Heart right ventricle (tissue), 16 donors: ENCODE measurements at regions of chr12 and their contacts with region 1.

Region 1: GRCh38 chr12:110826592-110827200 is 20.1 kb upstream of the CCDC63 start:
- DNase-seq: peak; percentile 86 to 87
- ATAC-seq: peak; percentile 92 to 97 (median 94)
- H3K4me3 ChIP-seq: peak overlapping the region in 4 of 10 donors; percentile 23 to 37 (median 30)
- H3K27ac ChIP-seq: no peak overlapping the region
- H3K4me1 ChIP-seq: peaks cover 0 to 6% (median 0%) of the 10 kb centered on the region in 9 donors
- H3K27me3 ChIP-seq: no peaks in the 10 kb centered on the region
- CTCF ChIP-seq: peak; percentile 60 to 87 (median 78)

Region 2: DNA sequence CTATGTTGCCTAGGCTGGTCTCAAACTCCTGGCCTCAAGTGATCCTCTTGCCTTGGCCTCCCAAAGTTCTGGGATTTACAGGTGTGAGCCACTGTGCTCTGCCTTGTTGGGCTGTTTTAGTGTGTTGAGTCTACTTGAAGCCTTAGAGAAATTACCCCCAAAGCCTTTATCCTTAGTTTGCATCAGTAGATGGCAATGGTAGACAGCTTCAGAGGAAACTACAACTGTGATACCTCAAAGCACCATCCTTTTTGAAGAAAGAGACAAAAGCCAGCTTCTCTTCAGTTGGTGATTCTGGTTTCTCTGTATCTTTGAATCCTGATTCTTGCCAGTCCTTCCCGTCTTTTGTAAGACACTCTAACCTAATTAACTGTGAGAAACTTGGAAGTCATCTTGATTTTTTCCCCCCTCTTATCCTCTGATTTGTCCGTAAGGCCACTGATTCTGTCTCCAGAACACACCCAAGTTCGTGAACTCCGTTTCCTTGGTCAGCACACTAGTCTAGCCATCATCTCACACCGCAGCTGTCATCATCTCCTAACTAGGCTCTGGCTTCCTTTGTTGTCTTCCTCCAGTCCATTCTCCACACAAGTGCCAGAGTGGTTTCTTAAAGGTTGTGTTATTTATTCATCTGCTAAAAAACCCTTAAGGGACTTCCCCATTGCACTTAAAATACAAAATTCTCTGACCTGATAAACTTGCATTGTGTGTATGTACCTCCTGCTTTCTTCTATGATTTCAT is 525.5 kb before region 1 on chr12:
- intact Hi-C with region 1: no loop called
- DNase-seq: no peak
- ATAC-seq: peak in 1 of 8 donors; percentile 23
- H3K4me3 ChIP-seq: no peak overlapping the region
- H3K27ac ChIP-seq: peak overlapping the region in 6 of 10 donors; percentile 1 to 50 (median 20)
- H3K4me1 ChIP-seq: peaks cover 5 to 94% (median 80%) of the 10 kb centered on the region in 9 donors
- H3K27me3 ChIP-seq: no peaks in the 10 kb centered on the region
- CTCF ChIP-seq: no peak

Region 3: DNA sequence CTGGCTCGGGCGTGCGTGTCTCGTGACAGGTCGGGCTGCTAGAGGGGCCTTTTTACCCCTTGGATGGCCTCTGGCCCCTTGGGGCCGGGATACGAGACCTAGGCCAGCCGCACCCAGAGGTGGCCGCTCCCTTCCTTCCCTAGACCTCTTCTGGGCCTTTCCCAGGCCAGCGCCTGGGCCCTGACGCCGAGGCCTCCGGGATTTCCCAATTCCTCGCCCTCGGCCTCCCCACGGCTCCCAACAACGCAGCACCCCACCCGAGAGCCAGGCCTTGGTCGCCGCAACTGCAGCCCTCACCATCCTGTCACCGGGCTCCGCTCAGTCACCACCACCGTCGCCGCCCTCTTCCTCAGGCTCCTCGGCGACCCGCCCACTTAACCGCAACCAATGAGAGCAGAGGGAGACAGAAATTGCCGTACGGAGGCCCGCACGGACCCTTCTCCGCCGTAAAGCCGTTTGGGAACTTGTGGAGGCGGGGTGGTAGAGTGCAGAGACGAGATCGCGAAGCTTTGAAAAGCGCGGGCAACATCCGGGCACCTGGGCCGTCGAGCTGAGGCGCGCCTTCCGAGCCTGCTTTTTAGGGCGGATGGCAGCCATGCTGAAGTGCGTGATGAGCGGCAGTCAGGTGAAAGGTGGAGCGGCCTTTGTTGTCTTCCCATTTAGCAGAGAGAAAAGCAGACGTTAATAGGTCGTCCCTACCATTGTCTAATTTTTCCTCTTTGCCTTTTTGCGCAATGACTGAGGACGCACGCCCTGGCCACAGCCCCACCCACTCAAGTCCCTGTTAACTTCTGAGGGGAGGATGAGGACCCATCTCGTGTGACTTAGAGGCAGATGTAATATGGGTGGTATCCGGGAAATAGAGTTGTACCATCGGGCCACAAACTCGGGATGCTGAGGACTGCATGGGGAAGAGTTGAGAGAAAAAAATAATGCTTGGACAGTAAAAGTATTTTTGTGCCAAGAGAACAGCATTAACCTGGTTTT is 324.7 kb before region 1 on chr12 and contains the starts of genes RAD9B and VPS29:
- intact Hi-C with region 1: loop called in 2 of 10 experiments (anchors 10 kb)
- DNase-seq: peak; percentile 98 to 99
- ATAC-seq: peak; percentile 97 to 100 (median 99)
- H3K4me3 ChIP-seq: peak within 1 kb of the TSS; percentile 70 to 98 (median 85)
- H3K27ac ChIP-seq: peak within 1 kb of the TSS; percentile 59 to 95 (median 91)
- H3K4me1 ChIP-seq: peaks cover 0 to 40% (median 35%) of the 10 kb centered on the region in 9 donors
- H3K27me3 ChIP-seq: no peaks in the 10 kb centered on the region
- CTCF ChIP-seq: no peak
- total RNA-seq, gene RAD9B: 0.23 to 1.6 (median 0.95) TPM
- total RNA-seq, gene VPS29: 83.7 to 117 (median 91.5) TPM

Region 4: DNA sequence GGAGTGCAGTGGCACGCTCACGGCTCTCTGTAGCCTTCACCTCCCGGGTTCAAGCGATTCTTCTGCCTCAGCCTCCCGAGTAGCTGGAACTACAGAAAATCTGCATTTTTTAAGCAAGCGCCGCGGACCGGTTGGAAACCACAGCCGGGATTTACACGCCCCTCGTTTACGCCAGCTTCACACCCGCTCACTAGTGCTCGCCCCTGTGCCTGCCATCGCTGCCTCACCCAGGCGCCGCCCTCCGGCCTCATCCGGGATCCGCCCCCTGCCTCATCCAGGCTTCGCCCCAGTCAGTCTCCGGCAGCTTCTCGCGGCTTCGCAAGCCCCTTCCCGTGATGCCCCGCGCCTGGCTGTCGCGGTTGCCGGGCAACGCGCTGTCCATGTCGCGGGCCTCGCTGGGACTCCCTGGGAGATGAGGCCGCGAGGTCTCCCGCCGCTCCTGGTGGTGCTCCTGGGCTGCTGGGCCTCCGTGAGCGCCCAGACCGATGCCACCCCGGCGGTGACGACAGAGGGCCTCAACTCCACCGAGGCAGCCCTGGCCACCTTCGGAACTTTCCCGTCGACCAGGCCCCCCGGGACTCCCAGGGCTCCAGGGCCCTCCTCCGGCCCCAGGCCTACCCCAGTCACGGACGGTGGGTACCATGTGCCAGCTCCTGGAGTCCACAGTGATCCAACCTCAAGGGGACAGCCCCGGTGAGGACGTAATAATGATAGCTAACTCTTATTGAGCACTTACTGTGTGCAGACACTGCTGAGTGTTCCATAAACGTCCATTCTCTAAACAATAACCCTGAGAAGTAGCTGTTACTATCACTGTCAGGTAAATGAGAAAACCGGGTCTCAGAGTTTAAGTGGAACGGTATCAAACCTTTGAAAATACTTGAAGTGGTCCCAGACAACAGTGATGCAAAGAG is 212.7 kb before region 1 on chr12 and contains the start of gene TCTN1:
- intact Hi-C with region 1: loop called in 7 of 10 experiments (anchors 5 to 10 kb)
- DNase-seq: peak; percentile 97 to 98
- ATAC-seq: peak; percentile 98 to 100 (median 99)
- H3K4me3 ChIP-seq: peak within 1 kb of the TSS; percentile 50 to 86 (median 72)
- H3K27ac ChIP-seq: peak within 1 kb of the TSS in 9 of 10 donors; percentile 52 to 88 (median 76)
- H3K4me1 ChIP-seq: peaks cover 0 to 19% (median 7%) of the 10 kb centered on the region in 9 donors
- H3K27me3 ChIP-seq: no peaks in the 10 kb centered on the region
- CTCF ChIP-seq: peak in 4 of 9 donors; percentile 9 to 33 (median 23)
- total RNA-seq, gene TCTN1: 14.2 to 31.9 (median 25.2) TPM

Region 5: GRCh38 chr12:110704748-110705147 is 121.9 kb before region 1 on chr12:
- intact Hi-C with region 1: loop called in 2 of 10 experiments (anchors 5 to 10 kb)
- DNase-seq: no peak
- ATAC-seq: no peak
- H3K4me3 ChIP-seq: no peak overlapping the region
- H3K27ac ChIP-seq: no peak overlapping the region
- H3K4me1 ChIP-seq: no peaks in the 10 kb centered on the region
- H3K27me3 ChIP-seq: no peaks in the 10 kb centered on the region
- CTCF ChIP-seq: peak in 2 of 9 donors; percentile 21

Region 6: DNA sequence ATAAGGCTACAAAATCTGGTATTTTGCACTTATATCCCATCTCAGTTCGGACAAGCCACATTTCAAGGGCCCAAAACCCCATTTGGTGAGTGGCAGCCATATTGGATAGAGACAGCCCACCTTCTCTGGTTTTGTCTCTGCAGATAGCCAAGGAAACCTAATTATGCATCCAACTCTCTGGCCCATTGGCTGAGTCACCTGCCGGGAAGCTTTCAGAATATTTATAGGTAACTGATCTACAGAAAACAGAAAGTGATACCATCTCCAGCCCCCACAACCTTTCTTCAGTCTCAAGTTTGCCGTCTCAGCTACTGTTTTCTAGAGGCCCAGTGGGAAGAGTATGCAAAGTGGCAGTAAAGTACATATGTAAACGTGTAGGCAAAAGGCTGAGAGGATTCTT is 50.3 kb before region 1 on chr12:
- intact Hi-C with region 1: no loop called
- DNase-seq: no peak
- ATAC-seq: no peak
- H3K4me3 ChIP-seq: no peak overlapping the region
- H3K27ac ChIP-seq: no peak overlapping the region
- H3K4me1 ChIP-seq: peaks cover 0 to 16% (median 0%) of the 10 kb centered on the region in 9 donors
- H3K27me3 ChIP-seq: no peaks in the 10 kb centered on the region
- CTCF ChIP-seq: no peak